ENCODE measurements at regions of chr20 and their contacts with region 1.

Region 1: GRCh38 chr20:354298-355064 is 7.6 kb downstream of the NRSN2 start:
- DNase-seq: peak; percentile 76
- H3K4me3 ChIP-seq: no peak overlapping the region
- H3K27ac ChIP-seq: no peak overlapping the region
- H3K4me1 ChIP-seq: no peaks in the 10 kb centered on the region
- H3K27me3 ChIP-seq: no peaks in the 10 kb centered on the region
- CTCF ChIP-seq: peak; percentile 66 to 82 (median 70)
- POLR2A ChIP-seq: no peak

Region 2: GRCh38 chr20:431012-431904 is 76.8 kb after region 1 on chr20:
- intact Hi-C with region 1: no loop called
- DNase-seq: peak; percentile 83
- H3K4me3 ChIP-seq: no peak overlapping the region
- H3K27ac ChIP-seq: no peak overlapping the region
- H3K4me1 ChIP-seq: no peaks in the 10 kb centered on the region
- H3K27me3 ChIP-seq: no peaks in the 10 kb centered on the region
- CTCF ChIP-seq: peak; percentile 41
- POLR2A ChIP-seq: no peak

Region 3: GRCh38 chr20:483813-484644 is 129.5 kb after region 1 on chr20:
- intact Hi-C with region 1: loop called (anchors 5 kb)
- DNase-seq: peak; percentile 73
- H3K4me3 ChIP-seq: no peak overlapping the region
- H3K27ac ChIP-seq: no peak overlapping the region
- H3K4me1 ChIP-seq: no peaks in the 10 kb centered on the region
- H3K27me3 ChIP-seq: no peaks in the 10 kb centered on the region
- CTCF ChIP-seq: no peak
- POLR2A ChIP-seq: no peak

Region 4: GRCh38 chr20:571754-572441 is 217.4 kb after region 1 on chr20:
- intact Hi-C with region 1: no loop called
- DNase-seq: peak; percentile 33
- H3K4me3 ChIP-seq: no peak overlapping the region
- H3K27ac ChIP-seq: no peak overlapping the region
- H3K4me1 ChIP-seq: peaks cover 7% of the 10 kb centered on the region
- H3K27me3 ChIP-seq: no peaks in the 10 kb centered on the region
- CTCF ChIP-seq: no peak
- POLR2A ChIP-seq: no peak

Region 5: DNA sequence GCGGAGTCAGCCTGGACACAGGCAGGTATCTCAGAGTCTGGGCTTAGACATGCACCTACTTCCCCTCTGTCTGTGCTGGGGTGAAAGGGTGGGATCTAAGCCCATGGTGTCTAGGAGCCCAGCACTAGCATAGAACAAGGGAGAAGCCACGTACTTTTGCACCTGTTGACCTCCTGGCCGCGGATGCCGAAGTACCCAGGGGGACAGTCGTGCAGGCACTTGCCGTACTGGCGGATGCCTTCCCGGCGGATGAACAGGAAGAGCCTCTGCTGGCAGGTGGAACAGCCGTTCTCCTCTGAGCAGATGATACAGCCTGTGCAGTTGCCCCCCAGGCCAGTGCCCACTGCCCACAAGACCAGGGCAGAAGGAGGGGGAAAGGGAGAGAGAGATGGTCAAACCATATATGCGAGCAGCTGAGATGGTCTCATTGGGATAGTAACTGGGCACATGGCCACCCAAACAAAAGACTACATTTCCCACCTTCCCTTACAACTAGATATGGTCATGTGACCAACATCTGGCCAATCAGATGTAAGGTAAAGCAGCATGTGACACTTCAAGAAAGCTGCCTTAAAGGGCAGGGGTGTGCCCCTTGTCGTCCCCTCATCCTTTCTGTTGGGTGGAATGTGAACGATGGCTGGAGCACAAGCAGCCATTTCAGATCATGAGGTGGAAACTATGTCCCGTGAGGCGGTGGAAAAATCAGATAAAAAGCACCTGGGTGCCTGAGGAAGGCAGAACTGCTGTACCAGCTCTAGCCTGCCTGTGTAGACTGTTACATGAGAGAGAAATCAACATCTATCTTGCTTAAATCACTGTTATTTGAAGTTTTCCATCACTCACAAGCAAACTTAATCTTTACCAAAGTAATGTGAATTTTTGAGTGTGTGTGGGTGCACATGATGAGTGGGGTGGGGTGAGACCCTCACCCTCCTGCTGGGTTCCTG is 613.6 kb after region 1 on chr20:
- intact Hi-C with region 1: no loop called
- DNase-seq: peak; percentile 89
- H3K4me3 ChIP-seq: no peak overlapping the region
- H3K27ac ChIP-seq: no peak overlapping the region
- H3K4me1 ChIP-seq: peaks cover 4% of the 10 kb centered on the region
- H3K27me3 ChIP-seq: no peaks in the 10 kb centered on the region
- CTCF ChIP-seq: no peak
- POLR2A ChIP-seq: no peak

Measured in testis (tissue), 5 donors.